Activated T-helper 2 cell treated with anti-CD3 and anti-CD28 coated beads, Interferon-gamma antibody, Interleukin-2, Interleukin-4, amounts not matched to agents 10 μg/mL and 5 μg/mL and 100 μg/mL, durations not matched to agents 14 hours and 24 hours and 36 hours (primary cell): ENCODE measurements at regions of chr14 and their contacts with region 1.

Region 1: DNA sequence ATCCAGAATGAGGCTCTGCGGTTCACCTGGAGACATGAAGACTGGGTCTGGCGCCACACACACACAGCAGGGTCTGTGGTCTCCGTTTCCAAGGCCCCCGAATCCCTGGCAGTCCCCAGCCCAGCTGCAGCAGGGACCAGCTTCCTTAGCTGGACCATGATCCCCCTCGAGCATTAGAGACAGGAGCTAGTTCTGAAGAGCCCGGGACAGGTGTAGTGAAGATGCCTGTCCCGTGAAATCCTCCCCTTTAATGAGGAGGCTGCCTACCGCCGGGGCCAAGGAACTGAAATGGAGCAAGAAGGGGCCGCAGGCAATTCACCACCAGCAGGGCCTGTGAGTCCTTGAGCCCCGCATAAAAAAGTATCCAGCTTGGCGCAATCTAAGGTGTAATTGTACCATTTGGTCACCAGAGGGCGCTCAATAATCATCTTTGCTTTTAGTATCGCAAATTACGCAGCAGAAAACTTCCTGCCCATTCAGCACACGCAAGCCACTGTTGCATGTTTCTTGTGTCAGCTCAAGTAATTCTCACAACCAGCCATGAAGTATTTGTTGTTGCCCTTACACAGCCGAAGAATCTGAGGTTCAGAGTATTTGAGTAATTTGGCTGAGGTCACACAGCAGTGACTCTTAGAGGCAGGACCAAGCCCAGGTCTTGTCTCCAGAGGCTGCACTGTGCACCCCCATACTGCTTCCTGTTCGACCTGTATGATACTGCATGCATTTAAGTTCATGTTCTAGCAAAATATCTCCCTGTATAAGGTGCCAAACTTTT is 54.3 kb upstream of the PPP2R5C start:
- DNase-seq: peak; percentile 55
- H3K4me3 Mint-ChIP-seq: no peak overlapping the region
- H3K27ac Mint-ChIP-seq: peak overlapping the region; percentile 18
- H3K4me1 Mint-ChIP-seq: peaks cover 22% of the 10 kb centered on the region
- H3K27me3 Mint-ChIP-seq: peaks cover 21% of the 10 kb centered on the region

Region 2: DNA sequence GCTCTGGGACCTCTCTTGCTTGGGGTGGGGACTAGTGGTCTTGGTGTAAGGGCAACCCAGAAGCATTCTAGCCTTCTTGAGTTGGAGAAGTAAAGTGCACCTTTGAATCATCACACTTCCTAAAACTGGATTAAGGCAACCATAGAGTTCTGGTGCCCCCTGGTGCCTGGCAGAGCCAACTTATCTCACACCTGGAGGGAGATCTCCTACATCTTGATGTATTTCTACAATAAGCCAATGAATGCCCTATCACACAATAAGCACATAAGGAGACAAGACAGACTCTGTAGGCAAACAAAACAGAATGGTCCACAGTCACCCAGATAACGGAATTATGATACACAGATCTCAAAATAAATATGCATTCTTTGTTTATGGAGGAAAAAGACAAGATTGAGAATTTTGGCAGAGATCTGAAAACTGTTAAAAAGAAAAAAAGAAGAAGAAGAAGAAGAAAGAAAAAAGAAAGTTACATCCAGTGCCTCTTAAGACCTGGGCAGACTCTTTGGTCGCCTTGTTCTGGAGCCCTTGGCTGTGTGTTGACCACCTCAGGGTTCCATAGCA is 41.7 kb before region 1 on chr14:
- intact Hi-C with region 1: no loop called
- DNase-seq: no peak
- H3K4me3 Mint-ChIP-seq: no peak overlapping the region
- H3K27ac Mint-ChIP-seq: no peak overlapping the region
- H3K4me1 Mint-ChIP-seq: no peaks in the 10 kb centered on the region
- H3K27me3 Mint-ChIP-seq: peaks cover 41% of the 10 kb centered on the region

Region 3: DNA sequence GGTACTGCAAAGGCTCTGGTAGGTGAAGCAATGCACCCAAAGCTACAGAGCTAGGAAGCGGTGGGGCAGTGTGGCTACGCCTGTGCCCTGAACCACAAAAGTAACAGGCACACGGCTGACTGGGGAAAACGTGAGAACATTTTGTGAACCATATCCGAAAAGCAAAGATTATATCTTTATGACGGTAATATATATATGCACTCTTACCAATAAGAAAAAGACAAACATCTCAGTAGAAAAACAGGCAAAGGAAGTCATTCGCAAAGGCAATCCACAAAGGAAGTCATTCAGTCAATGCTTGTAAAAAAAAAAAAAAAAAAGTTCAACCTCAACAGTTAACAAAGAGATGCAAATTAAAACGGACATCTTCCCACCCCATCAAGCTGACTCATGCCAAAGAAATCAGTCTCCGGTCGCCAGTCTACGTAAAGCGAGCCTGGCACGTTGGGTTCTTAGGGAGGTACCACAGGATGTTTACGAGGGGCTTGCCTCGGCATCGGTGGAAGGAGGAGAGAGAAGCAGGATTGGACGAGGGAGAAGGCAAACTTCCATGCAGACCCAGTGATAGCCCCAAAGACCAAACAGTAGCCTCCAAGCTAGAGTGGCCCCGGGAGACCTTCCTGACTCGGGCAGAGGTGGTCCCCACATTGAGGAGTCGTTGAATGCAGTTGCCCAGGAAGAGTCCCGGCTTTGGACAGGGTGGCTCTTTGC is 14.9 kb after region 1 on chr14:
- intact Hi-C with region 1: loop called (anchors 1 kb)
- DNase-seq: peak; percentile 79
- H3K4me3 Mint-ChIP-seq: peak overlapping the region; percentile 76
- H3K27ac Mint-ChIP-seq: peak overlapping the region; percentile 98
- H3K4me1 Mint-ChIP-seq: peaks cover 42% of the 10 kb centered on the region
- H3K27me3 Mint-ChIP-seq: no peaks in the 10 kb centered on the region

Region 4: GRCh38 chr14:101761032-101761880 is 54.0 kb after region 1 on chr14 and contains the start of gene PPP2R5C:
- intact Hi-C with region 1: loop called (anchors 1 kb)
- DNase-seq: peak; percentile 79
- H3K4me3 Mint-ChIP-seq: peak within 1 kb of the TSS; percentile 84
- H3K27ac Mint-ChIP-seq: peak within 1 kb of the TSS; percentile 53
- H3K4me1 Mint-ChIP-seq: peaks cover 31% of the 10 kb centered on the region
- H3K27me3 Mint-ChIP-seq: peaks cover 5% of the 10 kb centered on the region
- total RNA-seq, gene PPP2R5C: 170 and 174 TPM in 2 replicates

Region 5: DNA sequence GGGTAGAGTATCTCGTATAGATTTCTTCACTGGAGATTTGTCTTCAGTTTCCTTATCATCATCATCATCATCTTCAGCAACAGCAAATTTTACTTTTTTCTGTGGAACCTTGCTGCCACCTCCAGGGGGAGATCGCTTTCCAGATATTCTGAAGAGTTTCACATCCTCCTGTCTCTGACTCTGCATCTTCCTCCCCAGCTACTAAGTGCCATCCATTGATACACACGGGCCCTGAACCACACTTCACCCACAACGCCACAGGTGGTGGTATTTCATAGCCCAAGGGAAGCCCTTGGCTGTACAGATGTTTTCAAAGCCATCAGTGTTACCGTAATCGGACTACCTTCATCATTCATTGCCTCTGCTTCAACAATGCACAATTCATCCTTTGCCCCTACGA is 136.4 kb after region 1 on chr14:
- intact Hi-C with region 1: loop called (anchors 2 kb)
- DNase-seq: peak; percentile 53
- H3K4me3 Mint-ChIP-seq: no peak overlapping the region
- H3K27ac Mint-ChIP-seq: peak overlapping the region; percentile 60
- H3K4me1 Mint-ChIP-seq: peaks cover 74% of the 10 kb centered on the region
- H3K27me3 Mint-ChIP-seq: no peaks in the 10 kb centered on the region

Region 6: DNA sequence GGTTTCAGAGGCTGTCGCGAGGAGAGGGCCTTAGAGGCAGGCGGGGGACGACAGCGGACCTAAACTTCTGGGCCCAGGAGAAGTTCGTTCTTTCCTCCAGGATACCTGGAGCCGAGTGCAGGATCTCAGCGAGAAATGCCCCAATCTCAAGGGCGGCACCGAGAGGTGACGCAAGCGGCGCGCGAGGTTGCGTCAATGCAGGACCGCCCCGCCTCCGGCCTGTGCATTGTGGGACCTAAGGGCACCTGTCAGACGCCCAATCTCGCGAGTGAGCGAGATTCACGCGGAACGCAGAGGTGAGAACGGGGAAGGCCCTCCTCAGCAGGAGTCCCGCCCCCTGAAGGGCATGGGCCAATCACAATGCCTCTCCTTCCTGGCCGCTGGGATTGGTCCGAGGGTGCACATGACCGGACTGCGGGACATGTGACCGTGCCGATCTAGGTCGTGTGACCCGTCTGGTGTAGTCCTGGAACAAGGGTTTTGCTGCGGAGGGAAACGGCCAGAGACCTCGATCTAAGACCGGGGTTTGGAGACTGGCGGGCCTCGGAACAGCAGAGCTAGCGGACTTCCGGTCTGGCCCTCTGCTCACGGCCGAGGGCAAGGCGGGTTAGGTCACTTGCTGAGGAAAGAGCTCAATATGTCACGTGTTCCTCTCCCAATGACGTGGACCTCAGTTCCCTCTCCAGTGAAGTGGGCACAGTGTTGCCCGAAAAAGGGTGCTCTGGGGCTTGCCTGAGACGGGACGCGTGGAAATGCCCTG is 240.8 kb after region 1 on chr14:
- intact Hi-C with region 1: loop called (anchors 5 kb)
- DNase-seq: peak; percentile 100
- H3K4me3 Mint-ChIP-seq: peak overlapping the region; percentile 95
- H3K27ac Mint-ChIP-seq: peak overlapping the region; percentile 97
- H3K4me1 Mint-ChIP-seq: peaks cover 11% of the 10 kb centered on the region
- H3K27me3 Mint-ChIP-seq: peaks cover 15% of the 10 kb centered on the region

Region 7: GRCh38 chr14:102096214-102097114 is 389.2 kb after region 1 on chr14:
- intact Hi-C with region 1: loop called (anchors 5 kb)
- DNase-seq: peak; percentile 35
- H3K4me3 Mint-ChIP-seq: no peak overlapping the region
- H3K27ac Mint-ChIP-seq: no peak overlapping the region
- H3K4me1 Mint-ChIP-seq: peaks cover 13% of the 10 kb centered on the region
- H3K27me3 Mint-ChIP-seq: no peaks in the 10 kb centered on the region